Sigmoid colon (tissue), 7 donors: ENCODE measurements at regions of chr2 and their contacts with region 1.

Region 1: GRCh38 chr2:102442967-102443828 is 20.2 kb downstream of the IL18RAP start:
- DNase-seq: no peak
- H3K4me3 ChIP-seq: no peak overlapping the region
- H3K27ac ChIP-seq: no peak overlapping the region
- H3K4me1 ChIP-seq: no peaks in the 10 kb centered on the region
- H3K27me3 ChIP-seq: no peaks in the 10 kb centered on the region
- CTCF ChIP-seq: peak in 3 of 4 experiments; percentile 30 to 35 (median 34)
- EP300 ChIP-seq: no peak
- POLR2A ChIP-seq: no peak

Region 2: DNA sequence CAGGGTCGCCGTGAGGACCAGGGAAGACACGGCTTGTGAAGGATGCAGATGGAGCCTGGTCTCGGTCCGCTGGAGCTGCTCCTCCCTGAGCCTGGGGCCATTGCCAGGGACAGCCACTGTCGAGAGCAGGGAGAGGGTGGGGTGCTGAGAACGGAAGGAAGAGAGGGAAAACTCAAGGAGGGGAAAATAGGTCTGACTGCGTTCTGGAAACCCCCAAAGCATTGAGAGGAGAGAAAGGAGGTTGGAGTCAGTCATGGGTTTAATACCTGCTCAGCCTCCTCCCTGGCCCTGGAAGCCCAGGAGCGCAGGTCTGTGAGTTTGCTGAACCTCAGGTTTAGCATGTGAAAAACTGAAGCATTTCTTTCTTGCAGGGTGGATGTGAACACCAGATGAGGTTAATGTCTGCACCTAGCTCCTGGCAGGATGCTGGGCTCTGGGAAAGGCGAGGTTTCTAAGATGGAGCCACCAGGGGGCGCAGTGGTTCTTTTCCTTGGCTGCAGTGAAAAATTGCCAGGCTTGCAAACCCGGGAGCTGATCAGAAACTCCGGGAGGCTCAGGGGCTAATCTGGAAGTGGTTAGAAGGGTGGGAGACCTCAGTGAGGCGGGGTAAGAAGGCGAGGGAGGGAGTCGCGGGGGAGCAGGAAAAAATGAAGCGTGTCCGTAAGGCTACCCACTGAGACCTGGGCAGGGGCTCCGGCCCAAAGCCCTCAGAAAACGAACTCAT is 1101.1 kb before region 1 on chr2:
- intact Hi-C with region 1: loop called (anchors 10 kb)
- DNase-seq: peak; percentile 84
- H3K4me3 ChIP-seq: no peak overlapping the region
- H3K27ac ChIP-seq: no peak overlapping the region
- H3K4me1 ChIP-seq: no peaks in the 10 kb centered on the region
- H3K27me3 ChIP-seq: no peaks in the 10 kb centered on the region
- CTCF ChIP-seq: peak; percentile 45 to 70 (median 59)
- EP300 ChIP-seq: no peak
- POLR2A ChIP-seq: no peak

Region 3: DNA sequence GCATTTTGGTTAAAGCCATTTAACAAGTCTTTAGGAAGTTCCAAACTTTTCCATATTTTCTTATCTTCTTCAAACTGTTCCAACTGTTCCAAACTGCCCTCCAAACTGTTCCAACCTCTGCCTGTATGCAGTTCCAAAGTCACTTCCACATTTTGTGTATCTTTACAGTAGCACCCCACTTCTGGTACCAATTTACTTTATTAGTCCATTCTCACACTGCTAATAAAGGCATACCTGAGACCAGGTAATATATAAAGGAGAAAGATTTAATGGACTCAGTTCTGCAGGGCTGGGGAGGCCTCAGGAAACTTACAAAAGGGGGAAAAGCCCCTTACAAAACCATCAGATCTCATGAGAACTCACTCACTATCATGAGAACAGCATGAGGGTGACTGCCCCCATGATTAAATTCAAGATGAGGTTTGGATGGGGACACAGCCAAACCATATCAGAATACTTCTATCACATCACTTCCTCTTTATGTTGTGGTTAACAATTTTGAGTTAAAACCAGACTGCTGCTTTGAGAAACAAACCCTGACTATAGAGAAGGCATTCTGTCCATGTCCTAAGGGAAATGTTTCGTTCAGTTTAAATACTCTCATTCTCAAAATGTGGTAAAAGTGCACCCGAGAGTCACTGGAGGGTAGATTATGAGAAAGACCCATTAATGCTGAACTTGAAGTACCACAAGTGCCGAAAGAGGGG is 76.6 kb before region 1 on chr2:
- intact Hi-C with region 1: no loop called
- DNase-seq: no peak
- H3K4me3 ChIP-seq: no peak overlapping the region
- H3K27ac ChIP-seq: no peak overlapping the region
- H3K4me1 ChIP-seq: no peaks in the 10 kb centered on the region
- H3K27me3 ChIP-seq: no peaks in the 10 kb centered on the region
- CTCF ChIP-seq: no peak
- EP300 ChIP-seq: no peak
- POLR2A ChIP-seq: no peak